ENCODE measurements at regions of chr19 and their contacts with region 1.

Region 1: DNA sequence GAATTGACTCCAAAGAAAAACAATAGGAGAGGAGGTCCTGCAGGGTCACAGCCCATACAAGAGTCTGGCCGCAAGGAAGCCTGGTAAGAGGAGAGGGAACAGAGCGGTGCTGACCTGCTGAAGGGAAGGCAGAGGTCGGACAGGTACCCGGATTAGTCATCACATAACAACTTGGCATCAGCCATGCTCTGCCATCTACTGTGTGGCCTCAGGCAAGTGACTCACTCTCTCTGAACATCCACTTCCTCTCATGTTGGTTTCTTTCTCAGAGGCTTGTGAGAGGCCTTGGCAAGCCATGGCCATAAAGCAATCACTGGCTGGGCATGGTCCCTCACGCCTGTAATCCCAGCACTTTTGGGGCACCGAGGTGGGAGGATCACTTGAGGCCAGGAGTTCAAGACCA is 7.4 kb upstream of the CAPNS1 start:
- DNase-seq: no peak
- H3K4me3 ChIP-seq: no peak overlapping the region
- H3K27ac ChIP-seq: no peak overlapping the region
- H3K4me1 ChIP-seq: peaks cover 0 to 18% of the 10 kb centered on the region in 2 donors
- H3K27me3 ChIP-seq: no peaks in the 10 kb centered on the region
- CTCF ChIP-seq: no peak

Region 2: GRCh38 chr19:36152352-36153091 is 20.0 kb after region 1 on chr19 and contains the start of gene COX7A1:
- intact Hi-C with region 1: loop called (anchors 1 kb)
- DNase-seq: peak; percentile 59 to 85
- H3K4me3 ChIP-seq: peak within 1 kb of the TSS; percentile 74 to 96
- H3K27ac ChIP-seq: peak within 1 kb of the TSS; percentile 99 to 100
- H3K4me1 ChIP-seq: peaks cover 4 to 17% of the 10 kb centered on the region in 2 donors
- H3K27me3 ChIP-seq: no peaks in the 10 kb centered on the region
- CTCF ChIP-seq: no peak
- total RNA-seq, gene COX7A1: 51.2 TPM

Region 3: GRCh38 chr19:36169084-36169760 is 36.7 kb after region 1 on chr19:
- intact Hi-C with region 1: loop called (anchors 1 kb)
- DNase-seq: no peak
- H3K4me3 ChIP-seq: peak overlapping the region in 1 of 2 donors; percentile 28
- H3K27ac ChIP-seq: peak overlapping the region; percentile 71 to 85
- H3K4me1 ChIP-seq: no peaks in the 10 kb centered on the region
- H3K27me3 ChIP-seq: no peaks in the 10 kb centered on the region
- CTCF ChIP-seq: no peak

Region 4: GRCh38 chr19:36340786-36341386 is 208.4 kb after region 1 on chr19:
- intact Hi-C with region 1: no loop called
- DNase-seq: no peak
- H3K4me3 ChIP-seq: no peak overlapping the region
- H3K27ac ChIP-seq: no peak overlapping the region
- H3K4me1 ChIP-seq: no peaks in the 10 kb centered on the region
- H3K27me3 ChIP-seq: no peaks in the 10 kb centered on the region
- CTCF ChIP-seq: no peak

Region 5: GRCh38 chr19:36915992-36916830 is 783.7 kb after region 1 on chr19 and contains the starts of genes ZNF568 and ZNF829:
- intact Hi-C with region 1: loop called (anchors 10 kb)
- DNase-seq: peak; percentile 42 to 93
- H3K4me3 ChIP-seq: peak within 1 kb of the TSS; percentile 80 to 91
- H3K27ac ChIP-seq: peak within 1 kb of the TSS; percentile 93 to 98
- H3K4me1 ChIP-seq: peaks cover 0 to 10% of the 10 kb centered on the region in 2 donors
- H3K27me3 ChIP-seq: no peaks in the 10 kb centered on the region
- CTCF ChIP-seq: peak; percentile 57 to 73 (median 59)
- total RNA-seq, gene ZNF568: 2.4 TPM
- total RNA-seq, gene ZNF829: 1.2 TPM

Measured in ascending aorta (tissue), 2 donors.